T-cell (primary cell): ENCODE measurements at regions of chr5 and their contacts with region 1.

Region 1: DNA sequence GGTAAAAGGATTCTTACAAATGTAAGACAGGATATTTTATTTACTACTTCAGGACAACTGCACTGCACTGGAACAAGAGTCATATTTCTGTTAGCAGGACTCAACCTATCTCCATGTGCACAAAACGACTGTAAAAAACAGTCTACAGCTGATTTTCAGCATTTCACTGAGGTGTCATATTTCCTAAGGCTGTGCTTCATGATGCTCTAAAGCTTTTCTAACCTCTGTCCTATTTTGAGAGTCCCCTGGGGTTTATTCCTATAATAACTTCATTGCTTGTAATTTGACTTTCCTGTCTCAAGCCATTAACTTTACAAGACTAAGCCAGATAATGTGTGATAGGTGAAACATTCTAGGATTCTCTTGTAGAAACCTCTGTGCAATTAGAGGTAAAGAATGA is 472.3 kb downstream of the HINT1 start:
- DNase-seq: no peak
- ATAC-seq: no peak
- H3K4me3 ChIP-seq: no peak overlapping the region
- H3K4me3 Mint-ChIP-seq: no peak overlapping the region
- H3K27ac ChIP-seq: no peak overlapping the region
- H3K27ac Mint-ChIP-seq: no peak overlapping the region
- H3K4me1 ChIP-seq: no peaks in the 10 kb centered on the region
- H3K4me1 Mint-ChIP-seq: no peaks in the 10 kb centered on the region
- H3K27me3 ChIP-seq: no peaks in the 10 kb centered on the region
- H3K27me3 Mint-ChIP-seq: peaks cover 18 to 19% of the 10 kb centered on the region in 2 donors

Region 2: GRCh38 chr5:129991780-129992179 is 701.0 kb before region 1 on chr5:
- CTCF ChIA-PET with region 1: no interaction called
- POLR2A ChIA-PET with region 1: interaction called in 1 of 2 experiments, 13 read pairs
- DNase-seq: no peak
- ATAC-seq: no peak
- H3K4me3 ChIP-seq: no peak overlapping the region
- H3K4me3 Mint-ChIP-seq: no peak overlapping the region
- H3K27ac ChIP-seq: no peak overlapping the region
- H3K27ac Mint-ChIP-seq: no peak overlapping the region
- H3K4me1 ChIP-seq: no peaks in the 10 kb centered on the region
- H3K4me1 Mint-ChIP-seq: no peaks in the 10 kb centered on the region
- H3K27me3 ChIP-seq: no peaks in the 10 kb centered on the region
- H3K27me3 Mint-ChIP-seq: no peaks in the 10 kb centered on the region